Head of caudate nucleus (tissue), 42 donors: ENCODE measurements at regions of chr14 and their contacts with region 1.

Region 1: GRCh38 chr14:23320774-23321571 is at the start of gene PABPN1:
- DNase-seq: peak; percentile 96 to 100 (median 99)

Region 2: DNA sequence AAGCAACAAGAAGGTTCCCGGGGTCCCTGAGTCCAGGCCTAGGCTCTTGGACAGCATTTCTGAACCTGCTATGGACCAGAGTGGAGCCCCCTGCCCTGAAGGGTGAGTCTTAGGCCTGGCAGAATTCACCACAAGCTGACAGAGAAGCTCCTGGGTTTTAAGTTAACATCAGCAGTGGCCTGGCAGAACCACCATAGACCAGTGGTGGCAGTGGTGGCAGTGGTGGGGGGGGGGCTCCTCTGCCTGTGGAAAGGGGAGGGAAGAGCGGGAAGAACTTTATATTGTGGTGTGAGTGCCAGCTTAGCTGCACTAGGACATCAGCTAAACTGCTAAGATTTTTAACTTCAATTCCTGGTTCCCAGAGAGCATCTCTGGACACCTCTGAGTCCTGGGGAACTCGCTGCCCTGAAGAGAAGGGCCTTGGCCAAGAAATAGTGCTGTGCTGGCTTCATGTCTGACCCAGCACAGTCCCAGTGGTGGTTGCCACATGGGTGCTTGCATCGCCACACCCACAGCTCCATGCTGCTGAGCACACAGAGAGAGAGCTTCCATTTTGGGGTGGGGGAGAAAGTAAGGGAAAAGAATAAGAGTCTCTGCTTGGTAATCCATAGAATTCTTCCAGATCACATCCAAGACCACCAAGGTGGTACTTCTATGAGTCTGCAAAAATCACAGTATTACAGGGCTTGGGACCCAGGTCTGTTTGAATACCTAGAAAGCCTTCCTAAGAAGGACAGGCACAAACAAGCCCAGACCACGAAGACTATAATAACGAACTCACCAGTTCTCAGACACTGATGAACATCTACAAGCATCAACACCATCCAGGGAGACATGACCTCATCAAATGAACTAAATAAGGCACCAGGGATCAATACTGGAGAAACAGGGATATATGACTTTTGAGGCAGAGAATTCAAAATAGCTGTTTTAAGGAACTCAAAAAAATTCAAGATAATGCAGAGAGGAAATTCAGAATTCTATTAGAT is 103.6 kb before region 1 on chr14:
- intact Hi-C with region 1: no loop called
- DNase-seq: no peak

Region 3: GRCh38 chr14:23301288-23301968 is 19.5 kb before region 1 on chr14:
- intact Hi-C with region 1: loop called (anchors 2 kb)
- DNase-seq: peak; percentile 89 to 99 (median 97)

Region 4: DNA sequence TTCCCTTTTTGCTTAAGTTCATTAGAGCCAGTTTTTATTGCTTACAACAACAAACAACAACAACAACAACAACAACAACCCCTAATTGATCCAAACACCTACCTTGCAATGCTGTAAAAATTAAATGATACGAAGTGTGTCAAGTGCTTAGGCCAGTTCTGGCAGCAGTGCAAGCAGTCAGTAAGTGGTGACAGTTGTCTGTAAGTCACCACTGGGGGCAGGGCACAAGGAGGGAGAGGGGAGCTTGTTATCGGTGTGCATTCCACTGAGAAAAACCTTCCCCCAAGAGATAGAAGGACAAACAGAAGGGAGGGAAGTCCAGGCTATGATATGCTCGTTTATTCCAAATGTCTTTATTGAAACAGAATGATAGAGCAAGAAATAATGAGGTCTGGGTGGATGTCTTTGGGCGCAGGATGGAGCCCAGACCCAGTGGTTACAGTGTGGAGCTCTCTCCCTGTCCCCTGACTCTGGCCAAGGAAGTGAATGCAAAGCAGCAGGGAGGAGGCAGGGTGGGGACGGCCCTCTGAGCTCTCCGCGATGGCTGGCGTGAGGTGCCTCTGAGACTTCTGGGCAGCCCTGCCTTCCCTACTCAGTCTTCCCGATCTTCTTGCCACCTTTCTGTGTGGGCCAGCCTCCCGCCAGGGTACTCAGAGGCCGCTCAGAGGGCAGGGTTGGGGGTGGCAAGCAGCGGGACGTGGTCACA is 25.2 kb after region 1 on chr14:
- intact Hi-C with region 1: no loop called
- DNase-seq: peak in 3 of 42 donors; percentile 16 to 44 (median 25)

Region 5: DNA sequence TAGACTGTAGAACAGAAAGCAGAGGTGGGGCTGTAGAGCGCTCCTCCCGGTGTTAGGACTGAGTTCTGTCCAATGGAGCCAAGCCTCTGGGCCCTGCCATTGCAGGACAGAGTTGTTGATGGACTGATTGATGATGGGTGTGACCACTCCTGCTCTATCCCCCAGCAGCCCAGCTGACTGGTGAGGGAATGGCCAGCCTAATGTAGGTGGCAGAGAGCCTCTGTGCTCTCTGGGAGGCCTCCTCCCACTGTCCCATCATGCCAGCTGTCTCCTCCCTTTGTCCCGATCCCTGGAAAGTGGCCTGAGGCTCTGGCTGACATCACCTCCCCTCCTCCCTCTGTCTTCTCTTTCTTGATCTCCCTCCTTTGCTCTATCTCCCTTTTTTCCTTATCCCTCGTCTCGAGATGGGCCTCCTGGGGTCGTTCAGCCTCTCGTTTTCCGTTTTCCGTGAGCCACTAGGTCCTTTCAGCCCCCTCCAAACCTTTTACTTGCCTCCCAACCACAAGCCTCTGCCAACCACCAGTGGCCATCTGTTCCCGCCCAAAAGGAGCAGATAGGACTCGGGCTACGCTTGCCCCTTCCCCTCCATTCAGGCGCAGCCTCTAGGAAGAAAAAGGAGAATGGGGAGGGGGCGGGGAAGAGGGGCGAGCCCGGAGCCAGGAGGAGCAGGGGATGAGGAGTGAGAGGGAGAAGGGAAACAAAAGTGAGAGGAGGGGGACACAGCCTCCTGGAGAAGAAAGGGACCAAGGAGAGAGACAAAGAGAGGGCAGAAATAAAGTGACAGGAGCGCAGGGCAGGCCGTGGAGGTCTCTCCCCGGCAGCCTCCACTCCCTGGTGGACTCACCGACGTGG is 43.4 kb after region 1 on chr14:
- intact Hi-C with region 1: loop called (anchors 5 kb)
- DNase-seq: peak; percentile 42 to 90 (median 78)

Region 6: DNA sequence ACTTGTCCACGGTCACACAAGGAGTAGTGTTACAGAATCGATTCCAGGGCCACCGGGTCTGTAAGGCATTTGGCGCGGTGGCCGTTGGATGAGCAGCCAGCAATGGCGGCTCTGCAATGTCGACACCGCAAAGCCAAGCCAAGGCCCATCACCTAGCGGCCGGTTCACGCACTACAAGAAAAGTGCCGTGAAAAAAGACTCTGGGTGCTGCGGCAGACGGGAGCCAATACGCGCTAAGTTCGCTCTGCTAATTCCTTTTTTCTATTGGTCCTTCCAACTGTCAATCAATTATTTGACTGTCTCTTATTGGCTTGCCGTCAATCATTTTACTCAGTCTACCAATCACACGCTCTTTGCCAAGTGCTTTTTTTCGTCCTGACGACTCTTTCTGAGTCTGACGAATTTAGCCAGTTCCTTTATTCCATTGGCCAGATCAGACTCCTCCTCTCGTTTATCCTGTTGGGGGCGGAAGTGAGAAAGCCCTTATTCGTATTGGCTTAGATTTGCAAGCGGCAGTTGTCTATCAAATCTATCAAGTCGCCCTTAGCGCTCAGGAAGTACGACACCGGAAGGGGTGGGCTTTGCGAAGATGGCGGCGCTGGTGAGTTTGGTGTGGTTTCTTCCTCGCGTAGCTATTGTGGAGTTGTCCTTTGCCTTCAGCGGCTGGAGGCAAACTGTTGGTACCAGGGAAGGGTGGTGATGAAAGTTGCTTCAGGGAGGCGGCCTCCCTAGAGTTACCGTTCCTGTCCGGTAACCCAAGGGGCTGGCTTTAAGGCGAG is 148.3 kb after region 1 on chr14 and contains the start of gene NGDN:
- intact Hi-C with region 1: loop called (anchors 5 kb)
- DNase-seq: peak; percentile 92 to 99 (median 98)

Region 7: GRCh38 chr14:23555882-23556699 is 235.1 kb after region 1 on chr14 and contains the start of gene THTPA:
- intact Hi-C with region 1: loop called (anchors 10 kb)
- DNase-seq: peak; percentile 89 to 98 (median 96)